AG04450 (cell line): ENCODE measurements at regions of chr7 and their contacts with region 1.

Region 1: DNA sequence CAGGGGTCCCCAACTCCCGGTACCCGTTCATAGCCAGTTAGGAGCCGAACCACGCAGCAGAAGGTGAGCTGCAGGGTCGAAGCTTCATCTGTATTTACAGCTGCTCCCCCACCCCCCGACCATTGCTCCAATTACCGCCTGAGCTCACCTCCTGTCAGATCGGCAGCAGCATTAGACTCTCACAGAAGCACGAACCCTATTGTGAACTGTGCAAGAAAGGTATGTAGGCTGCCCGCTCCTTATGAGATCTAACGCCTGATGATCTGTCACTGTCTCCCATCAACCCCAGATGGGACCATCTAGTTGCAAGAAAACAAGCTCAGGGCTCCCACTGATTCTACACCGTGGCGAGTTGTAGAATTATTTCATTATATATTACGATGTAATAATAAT is 14.6 kb upstream of the AZGP1 start:
- DNase-seq: no peak
- H3K4me3 ChIP-seq: peak overlapping the region; percentile 38
- H3K27ac ChIP-seq: no peak overlapping the region
- H3K27me3 ChIP-seq: peaks cover 11% of the 10 kb centered on the region
- CTCF ChIP-seq: no peak

Region 2: DNA sequence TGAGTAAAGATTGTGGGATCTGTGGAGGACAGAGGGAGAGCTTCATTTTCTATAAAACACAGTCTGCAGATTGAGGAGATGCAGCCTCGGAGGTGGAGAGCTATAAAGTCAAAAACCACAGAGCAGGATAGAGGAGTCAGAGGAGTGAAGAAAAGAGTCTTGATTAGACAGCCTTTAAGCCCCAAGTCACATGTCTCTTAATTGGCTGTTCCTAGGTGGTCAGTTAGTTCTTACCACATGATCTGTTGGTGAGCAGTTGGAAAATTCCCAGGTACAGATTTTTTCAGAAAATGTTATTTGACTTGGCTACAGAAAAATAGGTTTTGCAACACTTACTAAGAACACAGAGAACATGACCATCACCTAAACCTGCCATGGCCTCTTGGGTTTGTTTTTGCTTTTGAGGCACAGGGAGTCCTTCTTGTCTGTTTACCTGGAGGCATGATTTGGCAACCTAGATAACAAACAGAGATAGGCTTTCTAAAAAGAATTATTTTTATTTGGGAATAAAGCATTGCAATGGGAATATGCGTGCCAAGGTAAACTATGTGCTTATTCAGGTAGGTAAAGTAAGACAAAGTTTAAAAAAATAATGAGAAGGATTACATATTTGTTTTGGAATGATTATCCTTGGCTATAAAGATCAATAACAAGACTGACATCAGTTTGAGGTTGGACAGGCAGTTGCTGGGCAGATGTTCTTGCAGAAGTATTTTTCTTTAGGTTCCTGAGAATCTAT is 163.2 kb before region 1 on chr7:
- CTCF ChIA-PET with region 1: no interaction called
- POLR2A ChIA-PET with region 1: no interaction called
- DNase-seq: no peak
- H3K4me3 ChIP-seq: no peak overlapping the region
- H3K27ac ChIP-seq: no peak overlapping the region
- H3K27me3 ChIP-seq: peaks cover 2% of the 10 kb centered on the region
- CTCF ChIP-seq: no peak

Region 3: DNA sequence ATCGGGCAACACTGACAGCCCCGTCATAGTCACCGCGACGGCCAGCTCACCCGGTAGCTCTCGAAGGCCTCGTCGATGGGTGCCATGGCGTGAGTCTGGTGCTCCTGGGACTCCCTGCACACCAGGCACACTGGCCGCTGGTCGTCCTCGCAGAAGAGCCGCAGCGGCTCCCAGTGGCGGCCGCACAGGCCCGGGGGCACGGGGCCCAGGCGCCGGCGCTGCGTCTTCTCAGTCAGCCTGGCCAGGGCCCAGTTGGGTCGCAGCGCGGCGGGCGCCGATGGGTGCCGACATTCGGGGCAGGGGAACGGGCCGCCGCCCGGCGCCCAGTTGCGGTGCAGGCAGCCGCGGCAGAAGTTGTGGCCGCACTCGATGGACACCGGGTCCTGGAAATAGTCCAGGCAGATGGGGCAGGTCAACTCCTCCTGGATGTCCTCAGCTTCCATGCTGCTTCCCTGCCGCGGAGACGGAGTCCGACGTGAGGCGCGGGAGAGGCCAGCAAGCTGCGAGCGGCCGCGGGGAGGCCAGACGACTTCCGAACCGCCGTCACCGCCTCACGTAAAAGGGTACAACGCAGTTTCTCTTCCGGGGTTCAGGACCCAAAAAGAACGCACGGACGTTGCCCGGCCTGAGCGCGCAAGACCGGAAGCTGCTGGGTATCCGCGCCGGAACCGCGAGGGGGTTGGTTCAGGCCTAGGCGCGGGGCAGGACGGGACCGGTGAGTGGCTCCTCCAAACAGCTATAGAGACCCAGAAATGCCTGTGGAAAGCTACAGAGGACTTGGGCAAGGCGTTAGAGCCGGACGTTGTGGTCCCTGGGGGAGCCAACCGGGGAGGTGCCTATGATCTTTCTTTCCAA is 71.3 kb before region 1 on chr7 and contains the start of gene TRIM4:
- CTCF ChIA-PET with region 1: interaction called, 41 read pairs
- POLR2A ChIA-PET with region 1: no interaction called
- DNase-seq: peak; percentile 81
- H3K4me3 ChIP-seq: peak within 1 kb of the TSS; percentile 90
- H3K27ac ChIP-seq: peak within 1 kb of the TSS; percentile 91
- H3K27me3 ChIP-seq: no peaks in the 10 kb centered on the region
- CTCF ChIP-seq: no peak; the same call in 1 of the 2 replicates
- polyA plus RNA-seq, gene TRIM4: 27.0 and 32.7 TPM in 2 replicates

Region 4: GRCh38 chr7:99975782-99976521 is 14.5 kb before region 1 on chr7 and contains the start of gene AZGP1:
- CTCF ChIA-PET with region 1: interaction called, 24 read pairs
- POLR2A ChIA-PET with region 1: no interaction called
- DNase-seq: no peak
- H3K4me3 ChIP-seq: no peak within 1 kb of the TSS
- H3K27ac ChIP-seq: no peak within 1 kb of the TSS
- H3K27me3 ChIP-seq: peaks cover 6% of the 10 kb centered on the region
- CTCF ChIP-seq: no peak
- polyA plus RNA-seq, gene AZGP1: not detected in 2 replicates